Body of pancreas (tissue), 4 donors: ENCODE measurements at regions of chr10 and their contacts with region 1.

Region 1: GRCh38 chr10:84537447-84537931 is 209.1 kb downstream of the CCSER2 start:
- DNase-seq: peak; percentile 59 to 69 (median 66)
- ATAC-seq: peak; percentile 81
- H3K4me3 ChIP-seq: no peak overlapping the region
- H3K27ac ChIP-seq: no peak overlapping the region
- H3K4me1 ChIP-seq: peaks cover 10% of the 10 kb centered on the region
- H3K27me3 ChIP-seq: no peaks in the 10 kb centered on the region
- CTCF ChIP-seq: peak; percentile 77 to 91 (median 89)
- POLR2A ChIP-seq: no peak

Region 2: DNA sequence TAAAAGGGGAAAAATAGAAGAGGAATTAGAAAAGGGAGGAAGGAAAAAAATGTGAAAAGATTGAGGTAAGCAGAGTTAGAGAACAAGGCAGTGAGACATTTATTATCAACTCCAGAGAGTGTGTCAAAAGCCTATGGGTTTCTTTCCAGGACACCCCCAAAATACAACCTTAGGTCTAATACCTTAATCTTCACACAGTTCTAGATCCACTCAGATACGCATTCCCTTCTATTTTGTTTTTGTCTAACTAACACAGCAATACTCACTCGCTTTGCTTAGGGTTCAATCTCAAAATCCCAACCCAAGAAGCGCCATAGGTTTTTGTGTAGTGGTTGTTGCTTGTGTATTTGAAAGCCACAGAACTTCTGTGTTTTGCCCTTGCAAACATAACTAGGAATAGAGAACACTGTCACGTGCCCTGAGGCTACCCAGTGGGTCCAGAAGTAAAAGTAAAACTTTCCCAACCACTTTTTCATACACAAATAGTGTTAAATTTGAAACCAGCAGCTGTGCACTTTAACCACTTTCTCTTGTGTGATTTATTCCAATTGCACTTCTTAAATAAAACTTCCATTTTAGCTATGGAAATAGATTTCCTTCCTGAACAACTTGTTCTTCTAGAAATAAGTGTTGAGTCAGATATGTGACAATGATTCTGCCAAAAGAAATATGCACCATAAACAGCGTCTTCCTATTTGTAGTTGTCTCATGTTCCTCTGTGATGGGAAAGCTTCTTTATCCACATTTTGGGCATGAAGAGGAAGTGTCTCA is 812.8 kb before region 1 on chr10:
- intact Hi-C with region 1: no loop called
- DNase-seq: no peak
- ATAC-seq: no peak
- H3K4me3 ChIP-seq: no peak overlapping the region
- H3K27ac ChIP-seq: no peak overlapping the region
- H3K4me1 ChIP-seq: no peaks in the 10 kb centered on the region
- H3K27me3 ChIP-seq: no peaks in the 10 kb centered on the region
- CTCF ChIP-seq: no peak
- POLR2A ChIP-seq: no peak

Region 3: GRCh38 chr10:84264611-84265141 is 272.8 kb before region 1 on chr10:
- intact Hi-C with region 1: loop called (anchors 5 kb)
- DNase-seq: peak; percentile 67 to 79 (median 72)
- ATAC-seq: peak; percentile 85
- H3K4me3 ChIP-seq: no peak overlapping the region
- H3K27ac ChIP-seq: no peak overlapping the region
- H3K4me1 ChIP-seq: no peaks in the 10 kb centered on the region
- H3K27me3 ChIP-seq: no peaks in the 10 kb centered on the region
- CTCF ChIP-seq: peak; percentile 78 to 93 (median 87)
- POLR2A ChIP-seq: no peak